ENCODE measurements at regions of chr2 and their contacts with region 1.

Region 1: GRCh38 chr2:85420536-85421259 is 2.2 kb downstream of the SH2D6 start:
- DNase-seq: peak; percentile 92
- ATAC-seq: peak; percentile 69
- H3K4me3 Mint-ChIP-seq: peak overlapping the region; percentile 69
- H3K27ac Mint-ChIP-seq: peak overlapping the region; percentile 89
- H3K4me1 Mint-ChIP-seq: peaks cover 42% of the 10 kb centered on the region
- H3K27me3 Mint-ChIP-seq: no peaks in the 10 kb centered on the region

Region 2: GRCh38 chr2:85390941-85391669 is 29.6 kb before region 1 on chr2:
- CTCF ChIA-PET with region 1: interaction called, 24 read pairs
- POLR2A ChIA-PET with region 1: interaction called, 5 read pairs
- DNase-seq: peak; percentile 82
- ATAC-seq: peak; percentile 82
- H3K4me3 Mint-ChIP-seq: no peak overlapping the region
- H3K27ac Mint-ChIP-seq: no peak overlapping the region
- H3K4me1 Mint-ChIP-seq: peaks cover 18% of the 10 kb centered on the region
- H3K27me3 Mint-ChIP-seq: no peaks in the 10 kb centered on the region

Region 3: GRCh38 chr2:85405076-85405402 is 15.7 kb before region 1 on chr2:
- CTCF ChIA-PET with region 1: interaction called, 31 read pairs
- POLR2A ChIA-PET with region 1: interaction called, 4 read pairs
- DNase-seq: no peak
- ATAC-seq: no peak
- H3K4me3 Mint-ChIP-seq: peak overlapping the region; percentile 69
- H3K27ac Mint-ChIP-seq: peak overlapping the region; percentile 82
- H3K4me1 Mint-ChIP-seq: peaks cover 54% of the 10 kb centered on the region
- H3K27me3 Mint-ChIP-seq: no peaks in the 10 kb centered on the region

Region 4: DNA sequence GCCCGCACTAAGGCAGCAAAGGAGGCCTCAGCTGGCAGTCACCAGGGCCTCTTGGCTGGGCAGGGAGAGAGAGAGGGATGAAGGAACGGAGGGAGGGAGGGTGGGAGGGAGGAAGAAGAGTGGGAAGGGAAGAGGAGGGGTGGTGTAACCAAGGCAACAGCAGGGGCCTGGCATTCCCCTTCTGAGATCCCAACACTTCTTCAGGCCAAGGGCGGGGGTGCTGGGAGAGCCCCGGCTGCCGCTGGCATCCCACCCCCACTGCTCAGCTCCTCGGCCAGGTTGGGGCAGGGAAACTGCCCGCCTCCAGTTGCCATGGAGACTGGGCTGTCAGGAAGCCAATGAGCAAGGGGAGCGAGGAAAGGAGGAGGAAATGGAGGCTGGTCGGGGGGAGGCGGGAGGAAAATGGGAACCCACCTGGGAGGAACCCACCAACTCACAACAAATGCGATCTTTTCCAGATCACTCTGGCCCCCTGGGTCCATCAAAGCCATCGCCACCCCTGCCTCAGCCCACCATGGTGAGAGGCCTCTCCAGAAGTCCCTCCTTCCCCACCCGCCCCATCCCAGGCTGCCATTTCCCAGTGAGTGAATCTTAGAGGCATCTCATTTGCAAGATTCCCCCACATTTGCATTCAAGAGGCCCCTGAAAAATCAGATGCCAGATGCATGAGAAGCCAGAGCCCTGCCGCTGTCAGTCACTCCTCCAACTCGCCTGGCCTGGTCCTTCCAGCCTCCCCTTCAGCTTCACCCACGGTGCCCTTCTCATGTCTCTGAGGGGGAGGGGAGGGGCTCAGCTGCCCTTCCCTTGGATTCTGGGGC is 10.3 kb after region 1 on chr2:
- CTCF ChIA-PET with region 1: interaction called, 12 read pairs
- POLR2A ChIA-PET with region 1: interaction called, 6 read pairs
- DNase-seq: no peak
- ATAC-seq: no peak
- H3K4me3 Mint-ChIP-seq: no peak overlapping the region
- H3K27ac Mint-ChIP-seq: no peak overlapping the region
- H3K4me1 Mint-ChIP-seq: peaks cover 11% of the 10 kb centered on the region
- H3K27me3 Mint-ChIP-seq: no peaks in the 10 kb centered on the region

Region 5: GRCh38 chr2:85437488-85438284 is 17.0 kb after region 1 on chr2:
- CTCF ChIA-PET with region 1: interaction called, 9 read pairs
- POLR2A ChIA-PET with region 1: interaction called, 12 read pairs
- DNase-seq: peak; percentile 77
- ATAC-seq: peak; percentile 83
- H3K4me3 Mint-ChIP-seq: peak overlapping the region; percentile 73
- H3K27ac Mint-ChIP-seq: peak overlapping the region; percentile 88
- H3K4me1 Mint-ChIP-seq: peaks cover 46% of the 10 kb centered on the region
- H3K27me3 Mint-ChIP-seq: no peaks in the 10 kb centered on the region

Region 6: DNA sequence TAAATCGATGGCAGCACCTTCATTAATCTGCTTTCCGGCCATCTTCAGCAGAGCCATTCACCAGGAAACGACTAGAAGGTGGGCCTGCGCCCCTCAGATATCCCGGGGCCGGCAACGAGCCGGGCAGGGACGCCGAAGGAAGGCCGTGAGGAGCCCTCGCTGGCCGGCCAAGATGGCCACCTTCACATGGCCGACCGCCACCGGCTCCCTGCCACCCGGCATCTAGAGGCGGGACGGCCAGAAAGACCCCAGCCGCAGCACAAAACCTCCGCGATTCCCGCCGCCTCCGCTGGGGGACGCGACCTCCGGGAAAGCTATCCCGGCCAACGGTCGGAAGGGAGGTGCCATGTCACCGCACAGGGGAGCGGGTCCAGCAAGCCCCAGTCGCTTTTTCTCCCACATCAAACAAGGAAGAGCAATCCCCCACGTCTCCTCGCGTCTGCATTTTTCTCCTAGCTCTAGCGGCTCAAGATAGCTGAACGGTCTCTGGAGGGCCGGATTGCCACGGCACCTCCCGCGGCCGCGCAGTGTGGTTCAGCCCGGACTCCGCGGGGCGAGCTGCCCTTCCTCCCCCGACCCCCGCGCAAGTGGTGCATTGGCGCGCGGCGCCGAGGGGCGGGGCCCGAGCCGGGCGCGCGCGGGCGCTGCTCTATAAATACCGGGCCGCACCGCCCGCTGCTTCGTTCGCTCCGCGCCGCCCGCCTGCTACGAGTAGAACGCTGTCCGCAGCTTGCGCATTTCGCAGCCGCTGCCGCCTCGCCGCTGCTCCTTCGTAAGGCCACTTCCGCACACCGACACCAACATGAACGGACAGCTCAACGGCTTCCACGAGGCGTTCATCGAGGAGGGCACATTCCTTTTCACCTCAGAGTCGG is 118.0 kb after region 1 on chr2 and contains the start of gene MAT2A:
- CTCF ChIA-PET with region 1: interaction called, 51 read pairs
- POLR2A ChIA-PET with region 1: interaction called, 61 read pairs
- DNase-seq: peak; percentile 88
- ATAC-seq: peak; percentile 71
- H3K4me3 Mint-ChIP-seq: peak within 1 kb of the TSS; percentile 96
- H3K27ac Mint-ChIP-seq: peak within 1 kb of the TSS; percentile 98
- H3K4me1 Mint-ChIP-seq: peaks cover 51% of the 10 kb centered on the region
- H3K27me3 Mint-ChIP-seq: no peaks in the 10 kb centered on the region
- total RNA-seq, gene MAT2A: 264 to 273 TPM

Region 7: GRCh38 chr2:85561317-85561979 is 140.8 kb after region 1 on chr2 and contains the start of gene GGCX:
- CTCF ChIA-PET with region 1: interaction called, 28 read pairs
- POLR2A ChIA-PET with region 1: interaction called, 3 read pairs
- DNase-seq: peak; percentile 97
- ATAC-seq: peak; percentile 97
- H3K4me3 Mint-ChIP-seq: peak within 1 kb of the TSS; percentile 99
- H3K27ac Mint-ChIP-seq: peak within 1 kb of the TSS; percentile 99
- H3K4me1 Mint-ChIP-seq: peaks cover 38% of the 10 kb centered on the region
- H3K27me3 Mint-ChIP-seq: no peaks in the 10 kb centered on the region
- total RNA-seq, gene GGCX: 18.9 to 20.0 TPM

Measured in activated CD8-positive, alpha-beta T cell treated with anti-CD3 and anti-CD28 coated beads, Interleukin-2, amount 10 ng/mL, durations not matched to agents 7 days and 5 days (primary cell).